Mammary epithelial cell (primary cell): ENCODE measurements at regions of chr2 and their contacts with region 1.

Region 1: GRCh38 chr2:43219383-43220228 is 6.8 kb downstream of the ZFP36L2 start:
- DNase-seq: peak; percentile 88
- H3K4me3 ChIP-seq: peak overlapping the region; percentile 37 to 44 (median 41)
- H3K27ac ChIP-seq: peak overlapping the region; percentile 88
- H3K4me1 ChIP-seq: peaks cover 46% of the 10 kb centered on the region
- H3K27me3 ChIP-seq: no peaks in the 10 kb centered on the region
- CTCF ChIP-seq: peak in 1 of 2 donors; percentile 3

Region 2: DNA sequence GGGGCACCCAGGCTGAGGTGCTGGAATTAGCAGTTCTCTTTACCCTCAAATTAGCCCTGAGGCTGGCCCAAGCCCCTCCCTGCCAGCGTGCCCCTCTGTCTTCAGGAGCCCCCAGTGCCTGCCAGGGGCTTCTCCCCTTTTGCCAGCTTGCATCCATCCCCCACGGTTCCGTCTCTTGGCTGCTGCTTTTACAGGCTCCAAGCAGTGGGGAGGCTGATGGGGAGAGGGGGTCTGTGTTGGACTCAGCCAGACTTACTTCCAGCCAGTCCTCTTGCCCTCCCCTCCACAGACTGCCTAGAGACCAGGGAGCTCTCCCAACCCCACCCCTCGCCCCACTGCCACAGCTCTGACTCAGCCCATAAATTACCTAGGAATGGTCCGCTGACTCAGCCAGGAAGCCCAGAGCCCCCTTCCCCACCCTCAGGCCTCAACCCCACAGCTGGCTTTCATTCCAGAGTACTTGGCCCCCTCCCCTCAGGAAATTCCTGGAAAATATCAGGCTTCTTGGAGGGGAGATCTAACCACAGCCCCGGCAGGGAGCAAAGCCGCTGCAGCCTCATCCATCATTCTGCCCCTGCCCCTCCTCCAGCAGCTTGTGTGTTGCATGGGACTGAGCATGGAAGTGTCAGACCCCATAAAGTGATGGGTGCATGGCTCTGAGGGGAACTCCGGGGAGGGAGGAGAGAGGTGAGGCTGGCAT is 177.8 kb before region 1 on chr2:
- CTCF ChIA-PET with region 1: no interaction called
- dilution Hi-C with region 1: loop called (anchors 5 kb)
- in situ Hi-C with region 1: no loop called
- intact Hi-C with region 1: loop called (anchors 5 kb)
- DNase-seq: peak; percentile 88
- H3K4me3 ChIP-seq: no peak overlapping the region
- H3K27ac ChIP-seq: peak overlapping the region; percentile 82
- H3K4me1 ChIP-seq: peaks cover 51% of the 10 kb centered on the region
- H3K27me3 ChIP-seq: no peaks in the 10 kb centered on the region
- CTCF ChIP-seq: no peak

Region 3: GRCh38 chr2:43123981-43124686 is 95.5 kb before region 1 on chr2:
- CTCF ChIA-PET with region 1: no interaction called
- dilution Hi-C with region 1: loop called (anchors 5 kb)
- in situ Hi-C with region 1: no loop called
- intact Hi-C with region 1: no loop called
- DNase-seq: no peak
- H3K4me3 ChIP-seq: no peak overlapping the region
- H3K27ac ChIP-seq: no peak overlapping the region
- H3K4me1 ChIP-seq: no peaks in the 10 kb centered on the region
- H3K27me3 ChIP-seq: no peaks in the 10 kb centered on the region
- CTCF ChIP-seq: no peak

Region 4: DNA sequence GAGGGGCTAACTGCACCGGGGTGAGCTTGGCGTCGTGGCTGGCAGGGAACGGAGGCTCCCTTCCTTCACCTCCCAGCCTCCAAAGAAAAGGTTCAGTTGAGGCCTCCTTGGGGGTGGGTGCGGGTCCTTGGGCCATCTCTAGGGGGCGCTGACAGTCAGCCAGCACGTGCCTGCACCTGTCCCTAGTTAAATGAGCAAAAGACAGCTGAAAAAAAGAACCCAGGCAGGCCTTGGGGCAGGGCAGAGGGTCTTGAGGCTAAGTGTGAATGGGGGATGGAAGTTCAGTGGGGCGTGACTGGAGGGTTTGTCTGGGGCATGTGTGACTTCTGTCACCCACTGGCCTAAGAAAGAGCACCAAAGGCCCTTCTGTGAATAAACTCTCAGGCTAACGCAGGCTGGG is 49.6 kb before region 1 on chr2:
- CTCF ChIA-PET with region 1: no interaction called
- dilution Hi-C with region 1: no loop called
- in situ Hi-C with region 1: no loop called
- intact Hi-C with region 1: loop called (anchors 2 kb)
- DNase-seq: no peak
- H3K4me3 ChIP-seq: no peak overlapping the region
- H3K27ac ChIP-seq: no peak overlapping the region
- H3K4me1 ChIP-seq: peaks cover 20% of the 10 kb centered on the region
- H3K27me3 ChIP-seq: no peaks in the 10 kb centered on the region
- CTCF ChIP-seq: peak; percentile 56 to 70

Region 5: DNA sequence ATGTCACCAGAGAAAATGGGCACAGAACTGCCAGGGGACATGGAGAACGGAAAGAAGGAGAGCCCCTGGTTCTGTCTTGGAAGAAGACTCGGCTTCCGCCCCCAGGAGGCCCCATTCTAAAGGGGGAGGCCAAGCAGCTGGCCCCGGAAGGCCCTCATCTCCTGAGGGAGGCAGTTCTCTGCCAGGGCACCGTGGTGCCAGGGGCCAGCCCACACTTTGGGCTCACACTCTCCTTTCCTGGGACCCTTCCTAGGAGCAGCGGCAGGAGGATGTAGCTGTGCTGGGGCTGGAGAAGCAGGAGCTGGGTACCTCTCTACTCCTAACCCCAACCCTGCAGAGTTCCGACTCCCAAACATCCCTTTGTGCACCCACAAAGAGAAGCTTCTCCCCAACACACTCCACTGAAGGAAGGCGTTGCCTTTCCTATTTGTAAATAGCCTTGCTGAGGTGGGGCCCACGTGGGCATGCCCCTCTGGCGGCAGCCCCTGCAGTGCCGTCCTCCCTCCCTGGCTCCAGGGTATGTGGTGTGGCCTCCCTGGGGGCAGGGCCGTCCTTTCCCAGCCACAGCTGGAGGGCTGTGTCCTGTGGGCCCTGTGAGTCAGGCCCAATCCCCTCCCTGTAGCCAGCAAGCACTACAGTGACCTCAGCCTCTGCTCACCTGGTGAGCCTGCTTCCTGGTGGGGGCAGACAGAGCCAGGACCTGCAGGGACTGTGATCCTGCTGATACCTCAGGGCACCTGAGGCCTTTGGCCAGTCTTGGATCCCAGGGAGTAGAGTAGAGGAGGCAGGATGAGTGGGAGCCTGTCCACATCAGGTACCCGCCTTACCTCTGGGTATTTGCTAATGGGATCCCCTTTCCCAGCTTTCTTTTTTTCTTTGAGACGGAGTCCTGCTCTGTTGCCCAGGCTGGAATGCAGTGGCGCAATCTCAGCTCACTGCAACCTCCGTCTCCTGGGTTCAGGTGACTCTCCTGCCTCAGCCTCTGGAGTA is 19.8 kb before region 1 on chr2:
- CTCF ChIA-PET with region 1: no interaction called
- dilution Hi-C with region 1: no loop called
- in situ Hi-C with region 1: no loop called
- intact Hi-C with region 1: loop called (anchors 2 kb)
- DNase-seq: peak; percentile 84
- H3K4me3 ChIP-seq: no peak overlapping the region
- H3K27ac ChIP-seq: peak overlapping the region; percentile 41
- H3K4me1 ChIP-seq: peaks cover 15% of the 10 kb centered on the region
- H3K27me3 ChIP-seq: no peaks in the 10 kb centered on the region
- CTCF ChIP-seq: peak in 1 of 2 donors; percentile 8